Mammary epithelial cell (primary cell): ENCODE measurements at regions of chr16 and their contacts with region 1.

Region 1: DNA sequence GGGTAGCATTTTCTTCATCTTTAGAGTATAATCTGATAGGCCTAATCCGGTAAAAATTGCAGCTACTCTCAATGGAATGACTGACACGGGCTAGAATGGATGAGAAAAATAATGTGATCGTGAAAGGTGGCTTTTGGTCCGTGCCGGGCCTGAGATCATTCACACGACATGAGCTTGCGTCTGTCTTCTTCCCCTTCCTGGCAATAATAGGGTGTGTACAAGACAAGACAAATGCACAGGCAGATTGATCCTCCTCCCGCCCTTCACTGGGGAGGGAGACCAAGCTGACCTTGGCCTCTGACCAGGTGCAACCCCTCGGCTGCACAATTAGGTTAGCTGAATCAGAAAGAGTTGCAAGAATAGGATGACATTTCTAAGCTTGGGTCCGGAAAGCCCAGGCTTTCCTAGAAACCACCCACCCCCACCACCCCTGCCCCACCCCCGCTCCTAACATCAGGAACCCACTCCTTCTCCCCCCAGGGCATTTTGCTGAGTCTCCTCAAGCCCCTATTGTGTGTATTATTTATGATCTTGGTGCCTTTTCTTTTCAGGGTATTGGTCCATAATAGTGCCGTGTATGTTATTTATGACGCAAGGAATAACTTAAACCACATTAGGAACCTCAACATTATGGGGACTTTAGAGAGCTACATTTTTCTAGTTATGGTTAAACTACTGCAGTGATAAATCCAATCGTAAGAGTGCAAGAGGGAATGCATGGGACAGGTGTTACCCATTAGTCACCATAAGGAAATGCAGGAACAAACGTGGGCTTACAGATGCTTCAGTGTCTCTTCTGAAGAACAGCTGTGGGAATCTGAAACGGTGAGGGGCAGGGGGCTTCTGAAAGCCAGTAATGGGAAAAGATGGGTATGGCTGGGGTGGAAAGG is 540.1 kb upstream of the PSMD7 start:
- DNase-seq: no peak
- H3K4me3 ChIP-seq: no peak overlapping the region
- H3K27ac ChIP-seq: no peak overlapping the region
- H3K4me1 ChIP-seq: no peaks in the 10 kb centered on the region
- H3K27me3 ChIP-seq: no peaks in the 10 kb centered on the region
- CTCF ChIP-seq: no peak

Region 2: GRCh38 chr16:73692861-73693260 is 63.7 kb before region 1 on chr16:
- CTCF ChIA-PET with region 1: no interaction called
- dilution Hi-C with region 1: loop called (anchors 5 kb)
- in situ Hi-C with region 1: no loop called
- intact Hi-C with region 1: no loop called
- DNase-seq: no peak
- H3K4me3 ChIP-seq: no peak overlapping the region
- H3K27ac ChIP-seq: no peak overlapping the region
- H3K4me1 ChIP-seq: peaks cover 8% of the 10 kb centered on the region
- H3K27me3 ChIP-seq: no peaks in the 10 kb centered on the region
- CTCF ChIP-seq: no peak